G401 (cell line): ENCODE measurements at regions of chr19 and their contacts with region 1.

Region 1: GRCh38 chr19:5934774-5935472 is 20.9 kb downstream of the CAPS start:
- DNase-seq: no peak

Region 2: GRCh38 chr19:5803752-5804515 is 131.0 kb before region 1 on chr19:
- in situ Hi-C with region 1: loop called (anchors 10 kb)
- DNase-seq: peak; percentile 53

Region 3: GRCh38 chr19:6103217-6103644 is 168.3 kb after region 1 on chr19:
- in situ Hi-C with region 1: no loop called
- DNase-seq: peak; percentile 93